Activated B cell treated with CpG ODN at 0.5 μM for 24 hours (primary cell): ENCODE measurements at regions of chr17 and their contacts with region 1.

Region 1: GRCh38 chr17:28598799-28599310 is at the start of gene SPAG5:
- DNase-seq: peak; percentile 94
- ATAC-seq: peak; percentile 89
- H3K4me3 Mint-ChIP-seq: peak within 1 kb of the TSS; percentile 87
- H3K27ac Mint-ChIP-seq: peak within 1 kb of the TSS; percentile 96
- H3K4me1 Mint-ChIP-seq: peaks cover 24% of the 10 kb centered on the region
- H3K27me3 Mint-ChIP-seq: no peaks in the 10 kb centered on the region
- CTCF ChIP-seq: no peak
- total RNA-seq, gene SPAG5: 14.6 and 15.8 TPM in 2 replicates

Region 2: DNA sequence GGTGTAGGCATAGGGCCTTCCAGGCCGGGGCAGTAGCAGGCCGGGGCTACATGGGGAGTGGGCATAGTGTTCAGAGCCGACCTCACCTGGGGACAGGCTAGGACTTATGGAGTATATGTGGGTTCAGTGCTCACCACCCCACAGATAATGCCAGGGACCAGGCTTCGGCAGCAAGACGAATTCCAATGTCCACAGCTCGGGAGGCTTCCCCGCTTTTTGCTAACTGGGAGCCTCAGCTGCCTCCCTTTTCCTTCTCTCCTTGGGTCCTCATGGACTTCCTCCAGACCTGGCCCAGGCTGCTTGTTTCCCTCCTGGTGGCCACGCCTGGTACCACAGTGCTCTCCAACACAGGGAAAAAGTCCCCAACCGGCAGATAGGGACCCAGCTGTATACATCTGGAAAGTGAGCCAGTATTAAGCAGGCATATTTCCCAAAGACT is 172.8 kb before region 1 on chr17:
- CTCF ChIA-PET with region 1: no interaction called
- POLR2A ChIA-PET with region 1: no interaction called
- intact Hi-C with region 1: no loop called
- DNase-seq: no peak
- ATAC-seq: no peak
- H3K4me3 Mint-ChIP-seq: no peak overlapping the region
- H3K27ac Mint-ChIP-seq: no peak overlapping the region
- H3K4me1 Mint-ChIP-seq: no peaks in the 10 kb centered on the region
- H3K27me3 Mint-ChIP-seq: peaks cover 21% of the 10 kb centered on the region
- CTCF ChIP-seq: no peak

Region 3: DNA sequence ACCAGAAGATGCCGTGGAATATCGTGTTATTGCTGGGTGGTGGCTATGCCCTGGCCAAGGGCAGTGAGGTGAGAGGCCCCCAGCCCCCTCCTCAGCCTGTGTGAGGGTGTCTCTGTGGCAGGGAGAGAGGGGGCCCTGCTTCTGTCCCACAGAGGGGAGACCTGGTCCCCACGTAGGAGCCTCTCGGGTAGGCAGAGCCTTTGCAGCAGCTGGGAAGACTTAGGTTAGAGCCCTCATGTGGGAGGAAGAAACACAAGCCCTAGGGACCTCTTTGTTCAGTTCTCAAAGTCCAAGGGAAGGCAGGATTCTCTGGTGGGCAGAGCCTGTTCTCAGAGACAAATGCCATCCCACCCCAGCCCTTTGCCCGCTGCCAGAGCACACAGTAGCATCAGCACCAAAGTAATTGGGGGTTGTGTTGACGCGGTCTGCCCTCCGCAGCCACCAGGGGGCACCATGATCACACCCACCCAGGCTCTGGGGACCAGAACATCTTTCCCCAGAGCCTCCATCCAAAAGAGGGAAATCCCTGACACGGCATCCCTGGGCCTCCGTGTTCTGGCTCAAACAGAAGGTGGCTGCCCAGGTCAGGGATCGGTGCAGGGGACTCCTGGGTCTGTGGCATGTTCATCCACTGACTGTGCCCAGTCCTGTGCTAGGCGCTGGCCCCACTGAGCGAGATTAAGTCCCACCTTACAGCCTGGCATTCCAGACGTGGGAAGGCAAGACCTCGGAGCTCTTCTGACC is 104.2 kb before region 1 on chr17:
- CTCF ChIA-PET with region 1: no interaction called
- POLR2A ChIA-PET with region 1: interaction called, 6 read pairs
- intact Hi-C with region 1: loop called (anchors 1 kb)
- DNase-seq: peak; percentile 82
- ATAC-seq: peak; percentile 95
- H3K4me3 Mint-ChIP-seq: no peak overlapping the region
- H3K27ac Mint-ChIP-seq: no peak overlapping the region
- H3K4me1 Mint-ChIP-seq: peaks cover 11% of the 10 kb centered on the region
- H3K27me3 Mint-ChIP-seq: peaks cover 2% of the 10 kb centered on the region
- CTCF ChIP-seq: peak; percentile 63

Region 4: DNA sequence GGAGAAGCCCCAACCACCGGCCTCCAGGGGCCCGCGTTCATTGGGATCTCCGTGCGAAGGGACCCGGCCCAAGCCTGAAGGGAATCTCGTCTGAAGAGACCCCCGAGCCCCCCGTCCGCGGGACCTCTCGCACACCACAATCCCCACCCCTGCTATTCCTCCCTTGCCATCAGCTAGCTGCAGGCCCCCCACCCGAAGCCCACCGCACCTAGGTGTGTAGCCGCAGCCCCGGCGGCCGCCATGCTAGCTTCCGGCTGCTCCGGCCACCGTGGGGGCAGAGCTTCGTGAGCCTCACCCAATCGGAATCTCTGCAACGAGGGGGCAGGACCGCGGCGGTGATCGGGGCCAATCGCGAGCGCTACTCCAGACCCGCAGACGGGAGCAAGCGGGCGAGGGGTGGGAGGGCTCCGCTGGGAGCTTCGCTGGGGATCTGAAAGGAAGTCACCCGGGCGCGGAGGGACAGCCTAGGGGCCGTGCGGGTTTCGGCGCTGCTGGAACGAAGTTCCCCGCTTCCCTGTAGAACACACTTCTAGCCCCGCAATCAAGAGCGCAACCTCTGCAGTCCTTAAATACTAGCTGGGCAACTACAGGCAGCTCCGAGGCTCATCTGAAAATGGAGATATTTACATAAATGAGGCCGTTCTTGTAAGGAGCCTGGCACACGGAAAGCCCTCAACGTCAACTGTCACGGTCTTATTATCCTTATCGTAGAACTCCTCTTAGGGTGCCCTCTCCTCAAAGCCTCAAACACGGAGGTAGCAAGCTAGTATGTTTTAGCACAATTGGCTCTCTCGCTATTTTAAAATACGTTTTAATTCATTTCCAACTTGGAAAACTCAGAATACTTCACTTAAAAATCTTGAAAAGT is 27.4 kb before region 1 on chr17 and contains the start of gene PIGS:
- CTCF ChIA-PET with region 1: interaction called, 7 read pairs
- POLR2A ChIA-PET with region 1: interaction called, 51 read pairs
- intact Hi-C with region 1: loop called (anchors 1 kb)
- DNase-seq: peak; percentile 84
- ATAC-seq: peak; percentile 94
- H3K4me3 Mint-ChIP-seq: peak within 1 kb of the TSS; percentile 95
- H3K27ac Mint-ChIP-seq: peak within 1 kb of the TSS; percentile 87
- H3K4me1 Mint-ChIP-seq: peaks cover 62% of the 10 kb centered on the region
- H3K27me3 Mint-ChIP-seq: no peaks in the 10 kb centered on the region
- CTCF ChIP-seq: no peak
- total RNA-seq, gene PIGS: 86.4 and 92.2 TPM in 2 replicates

Region 5: GRCh38 chr17:28576758-28577465 is 21.9 kb before region 1 on chr17 and contains the start of gene ALDOC:
- CTCF ChIA-PET with region 1: no interaction called
- POLR2A ChIA-PET with region 1: interaction called, 51 read pairs
- intact Hi-C with region 1: loop called (anchors 1 kb)
- DNase-seq: peak; percentile 98
- ATAC-seq: peak; percentile 99
- H3K4me3 Mint-ChIP-seq: peak within 1 kb of the TSS; percentile 79
- H3K27ac Mint-ChIP-seq: peak within 1 kb of the TSS; percentile 92
- H3K4me1 Mint-ChIP-seq: peaks cover 26% of the 10 kb centered on the region
- H3K27me3 Mint-ChIP-seq: no peaks in the 10 kb centered on the region
- CTCF ChIP-seq: no peak
- total RNA-seq, gene ALDOC: 73.4 and 75.0 TPM in 2 replicates

Region 6: GRCh38 chr17:28693869-28694268 is 95.0 kb after region 1 on chr17:
- CTCF ChIA-PET with region 1: no interaction called
- POLR2A ChIA-PET with region 1: no interaction called
- intact Hi-C with region 1: no loop called
- DNase-seq: no peak
- ATAC-seq: no peak
- H3K4me3 Mint-ChIP-seq: no peak overlapping the region
- H3K27ac Mint-ChIP-seq: no peak overlapping the region
- H3K4me1 Mint-ChIP-seq: no peaks in the 10 kb centered on the region
- H3K27me3 Mint-ChIP-seq: no peaks in the 10 kb centered on the region
- CTCF ChIP-seq: no peak